ENCODE measurements at regions of chr2 and their contacts with region 1.

Region 1: GRCh38 chr2:135258193-135258592 is 206.1 kb downstream of the RAB3GAP1 start:
- DNase-seq: no peak
- ATAC-seq: no peak

Region 2: DNA sequence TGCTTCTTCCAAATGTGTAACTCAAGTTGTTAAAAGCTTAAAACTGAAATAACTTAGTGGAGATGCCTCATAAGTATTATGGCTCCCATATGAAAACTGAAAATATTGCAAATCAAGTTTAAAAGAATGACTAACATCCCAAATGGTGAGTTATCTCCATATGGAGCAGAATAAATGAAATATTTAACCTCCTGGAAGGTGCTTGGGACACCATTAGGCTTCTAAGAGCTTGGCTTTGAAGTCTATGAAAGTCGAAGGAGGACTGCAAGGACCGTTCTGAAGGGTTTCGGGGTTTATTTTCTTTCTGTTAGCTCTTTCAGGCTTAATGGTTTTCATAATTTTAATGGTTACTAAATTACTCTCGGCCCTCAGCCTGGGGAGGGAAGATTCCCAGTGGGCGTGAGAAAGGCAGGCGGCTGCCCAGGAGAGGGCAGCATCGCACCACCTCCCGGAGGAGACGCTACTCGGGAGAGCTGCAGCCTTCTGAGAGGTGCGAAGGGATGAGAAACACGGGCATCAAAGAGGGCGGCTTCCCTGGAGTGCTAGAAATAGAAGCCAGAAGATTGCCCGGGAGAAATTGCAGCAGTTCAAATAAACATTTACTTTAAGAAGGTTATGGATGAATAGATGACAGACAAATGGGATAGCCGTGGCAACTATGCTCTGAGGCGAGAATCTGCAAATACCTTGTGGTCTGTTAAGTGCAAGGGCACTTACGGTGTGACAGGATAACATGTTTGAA is 254.0 kb before region 1 on chr2:
- intact Hi-C with region 1: loop called (anchors 5 kb)
- DNase-seq: peak; percentile 77
- ATAC-seq: peak; percentile 94

Region 3: GRCh38 chr2:135183822-135184221 is 74.4 kb before region 1 on chr2:
- intact Hi-C with region 1: no loop called
- DNase-seq: no peak
- ATAC-seq: no peak

Region 4: DNA sequence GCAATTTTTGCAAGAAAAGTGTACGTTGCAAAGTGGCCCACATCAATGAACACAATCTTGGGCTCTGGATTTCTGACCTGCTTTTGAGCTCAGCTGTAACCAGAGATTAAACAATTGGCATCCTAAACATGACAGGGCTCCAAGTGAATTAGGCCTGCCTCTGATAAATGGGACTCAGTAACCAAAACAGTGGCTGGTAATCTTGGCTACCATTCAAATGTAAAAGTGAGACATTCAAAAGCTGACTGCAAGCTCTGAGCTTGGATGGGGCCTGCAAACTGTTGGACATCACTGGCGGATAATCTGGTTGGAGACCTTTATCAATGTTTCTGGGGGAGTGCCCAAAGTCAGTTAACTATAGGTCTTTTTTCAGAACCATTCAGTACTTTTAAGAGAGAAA is 45.4 kb before region 1 on chr2:
- intact Hi-C with region 1: no loop called
- DNase-seq: no peak
- ATAC-seq: peak; percentile 79

Measured in Right ventricle myocardium inferior (tissue), 1 donor.